Activated CD8-positive, alpha-beta memory T cell treated with anti-CD3 and anti-CD28 coated beads, Interleukin-2, amount 10 ng/mL, durations not matched to agents 7 days and 5 days (primary cell): ENCODE measurements at regions of chr2 and their contacts with region 1.

Region 1: DNA sequence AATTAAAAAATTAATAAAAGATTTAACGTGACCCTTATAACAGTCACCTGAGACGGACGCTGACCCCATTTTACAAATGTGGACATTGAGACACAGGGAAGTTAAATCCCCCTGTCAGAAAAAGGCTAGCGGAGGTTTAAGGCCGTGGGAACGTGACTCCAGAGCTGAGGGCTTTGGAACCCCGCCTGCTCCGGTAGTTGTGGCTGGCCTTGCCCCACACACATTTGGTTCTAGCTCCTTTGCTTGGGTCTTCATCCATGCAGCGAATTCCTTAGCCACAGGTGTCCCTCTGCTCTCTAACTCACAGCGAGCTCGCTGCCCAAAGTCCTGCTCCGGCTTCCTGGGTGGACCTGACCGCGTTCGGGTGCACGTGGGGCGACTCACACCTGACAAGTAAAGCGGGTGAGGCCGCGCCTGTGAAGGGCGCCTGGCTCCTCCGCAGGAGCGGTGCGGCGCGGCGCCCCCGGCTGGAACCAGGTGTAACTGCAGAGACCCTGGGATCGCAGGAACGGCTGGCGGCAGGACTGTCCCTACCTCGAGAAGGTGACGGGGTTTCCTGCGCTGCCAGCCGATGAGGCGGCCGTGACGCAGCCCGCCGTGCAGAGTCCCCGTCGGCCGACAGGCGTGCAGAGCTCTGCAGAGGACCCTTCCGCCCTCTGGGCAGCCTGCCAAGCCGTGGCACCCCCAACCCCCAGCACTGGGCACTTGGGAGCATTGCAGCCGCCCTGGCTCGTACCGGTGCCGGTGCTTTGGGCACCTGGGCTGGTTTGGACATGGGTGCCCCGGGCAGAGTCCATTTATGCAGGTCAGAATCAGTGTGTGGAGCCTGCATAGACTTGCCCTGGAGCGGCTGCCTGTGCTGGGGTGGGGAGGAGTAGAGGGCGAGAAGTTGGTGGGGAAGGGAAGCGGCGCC is 2.4 kb upstream of the PROC start:
- DNase-seq: peak; percentile 86
- ATAC-seq: peak; percentile 89
- H3K4me3 Mint-ChIP-seq: peak overlapping the region; percentile 69
- H3K27ac Mint-ChIP-seq: peak overlapping the region; percentile 16
- H3K4me1 Mint-ChIP-seq: peaks cover 31% of the 10 kb centered on the region
- H3K27me3 Mint-ChIP-seq: peaks cover 14% of the 10 kb centered on the region

Region 2: GRCh38 chr2:126858013-126858412 is 557.8 kb before region 1 on chr2:
- CTCF ChIA-PET with region 1: no interaction called
- DNase-seq: no peak
- ATAC-seq: no peak
- H3K4me3 Mint-ChIP-seq: no peak overlapping the region
- H3K27ac Mint-ChIP-seq: no peak overlapping the region
- H3K4me1 Mint-ChIP-seq: no peaks in the 10 kb centered on the region
- H3K27me3 Mint-ChIP-seq: peaks cover 3% of the 10 kb centered on the region

Region 3: DNA sequence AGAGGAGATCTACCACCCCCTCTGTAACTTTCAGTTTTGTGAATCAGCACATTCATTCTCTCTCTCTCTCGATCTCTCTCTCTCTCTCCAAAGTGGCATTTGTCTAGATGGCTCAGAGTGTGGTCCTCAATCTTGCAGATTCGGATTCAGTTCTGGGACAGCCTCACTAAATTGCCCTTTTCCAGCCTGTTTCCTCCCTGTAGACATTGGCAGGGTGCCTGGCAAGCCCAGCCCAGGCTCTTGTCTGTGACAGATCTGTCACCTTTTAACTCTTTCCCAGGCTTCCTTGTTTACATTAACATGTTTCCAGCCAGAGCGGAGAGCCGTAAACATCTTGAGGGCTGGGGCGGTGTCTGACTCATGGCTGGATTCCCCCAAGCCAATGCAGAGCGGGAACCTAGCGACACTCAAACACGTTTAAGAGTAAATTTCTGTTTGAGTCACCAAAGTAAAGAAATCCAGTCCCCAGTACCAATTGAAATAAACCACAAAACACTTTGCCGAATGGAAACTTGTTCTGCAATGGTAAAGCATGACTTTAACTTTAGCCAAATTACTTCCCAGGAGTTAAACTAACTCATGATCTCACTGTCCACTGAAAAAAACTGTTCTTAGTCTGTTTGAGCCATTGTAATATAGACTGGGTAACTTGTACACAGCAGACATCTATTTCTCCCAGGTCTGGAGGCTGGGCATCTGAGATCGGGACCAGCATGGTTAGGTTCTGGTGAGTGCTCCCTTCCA is 189.2 kb before region 1 on chr2:
- CTCF ChIA-PET with region 1: no interaction called
- DNase-seq: peak; percentile 74
- ATAC-seq: peak; percentile 86
- H3K4me3 Mint-ChIP-seq: peak overlapping the region; percentile 19
- H3K27ac Mint-ChIP-seq: no peak overlapping the region
- H3K4me1 Mint-ChIP-seq: peaks cover 19% of the 10 kb centered on the region
- H3K27me3 Mint-ChIP-seq: peaks cover 35% of the 10 kb centered on the region

Region 4: DNA sequence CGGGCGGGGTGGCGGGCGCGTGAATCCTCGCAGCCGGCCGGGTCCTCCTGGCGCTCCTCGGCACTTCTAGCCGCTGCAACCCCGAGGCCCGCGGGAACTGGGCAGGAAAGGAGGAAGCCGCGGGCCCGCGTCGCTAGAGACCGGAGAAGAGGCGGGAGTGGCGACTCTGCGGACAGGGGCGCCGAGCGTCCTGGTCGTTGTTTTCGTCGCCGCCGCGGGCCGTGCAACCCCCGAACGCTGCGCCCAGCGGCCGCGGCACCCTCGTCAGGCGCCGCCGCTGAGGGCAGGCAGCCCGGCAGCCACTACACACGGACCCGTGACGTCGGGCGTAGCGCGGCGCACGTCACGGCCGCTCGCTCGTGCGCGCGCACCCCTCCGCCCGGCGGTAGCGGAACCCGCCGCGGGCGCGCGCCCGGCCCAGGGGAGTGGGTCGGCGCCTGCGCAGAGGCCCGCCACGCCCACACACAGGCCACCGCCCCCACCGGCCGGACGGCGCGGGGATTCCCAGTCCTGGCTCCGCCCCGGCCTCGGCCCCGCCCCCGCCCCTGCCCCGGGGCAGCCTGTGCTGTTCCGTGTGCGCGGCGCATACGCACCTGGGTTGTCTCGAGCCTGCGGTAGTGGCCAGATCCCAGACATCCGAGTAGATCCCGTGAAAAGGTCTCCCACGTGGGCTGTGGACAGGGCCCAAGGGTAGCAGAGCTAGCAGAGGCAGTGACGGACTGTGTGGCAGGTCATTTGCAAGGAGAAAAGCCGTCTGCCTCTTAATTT is 28.0 kb before region 1 on chr2 and contains the start of gene MAP3K2:
- CTCF ChIA-PET with region 1: interaction called, 13 read pairs
- DNase-seq: peak; percentile 95
- ATAC-seq: peak; percentile 83
- H3K4me3 Mint-ChIP-seq: peak within 1 kb of the TSS; percentile 91
- H3K27ac Mint-ChIP-seq: peak within 1 kb of the TSS; percentile 92
- H3K4me1 Mint-ChIP-seq: peaks cover 65% of the 10 kb centered on the region
- H3K27me3 Mint-ChIP-seq: no peaks in the 10 kb centered on the region
- total RNA-seq, gene MAP3K2: 53.5 to 56.9 TPM

Region 5: DNA sequence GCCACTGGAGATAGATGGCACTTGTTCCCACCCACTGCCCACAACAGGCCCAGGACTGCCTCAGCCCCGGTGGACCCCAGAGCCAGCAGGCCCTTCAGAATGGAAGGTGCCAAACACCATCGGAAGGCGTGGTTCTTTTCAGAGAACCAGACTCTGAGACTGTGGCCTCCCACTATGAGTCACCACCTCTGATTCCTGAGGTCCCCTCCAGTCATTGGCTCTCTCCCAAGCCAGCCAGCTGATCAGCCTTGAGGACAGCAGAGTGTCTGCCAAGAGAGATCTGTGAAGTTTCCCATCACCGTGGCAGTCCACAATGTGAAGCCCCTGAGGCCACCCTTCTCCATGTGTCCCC is 17.6 kb before region 1 on chr2:
- CTCF ChIA-PET with region 1: interaction called, 12 read pairs
- DNase-seq: peak; percentile 83
- ATAC-seq: peak; percentile 97
- H3K4me3 Mint-ChIP-seq: no peak overlapping the region
- H3K27ac Mint-ChIP-seq: no peak overlapping the region
- H3K4me1 Mint-ChIP-seq: peaks cover 27% of the 10 kb centered on the region
- H3K27me3 Mint-ChIP-seq: no peaks in the 10 kb centered on the region